Cardiac septum (tissue), 1 donor: ENCODE measurements at regions of chr1 and their contacts with region 1.

Region 1: GRCh38 chr1:85200870-85201339 is at the start of gene SYDE2:
- DNase-seq: peak; percentile 86
- total RNA-seq, gene SYDE2: 20.2 TPM

Region 2: DNA sequence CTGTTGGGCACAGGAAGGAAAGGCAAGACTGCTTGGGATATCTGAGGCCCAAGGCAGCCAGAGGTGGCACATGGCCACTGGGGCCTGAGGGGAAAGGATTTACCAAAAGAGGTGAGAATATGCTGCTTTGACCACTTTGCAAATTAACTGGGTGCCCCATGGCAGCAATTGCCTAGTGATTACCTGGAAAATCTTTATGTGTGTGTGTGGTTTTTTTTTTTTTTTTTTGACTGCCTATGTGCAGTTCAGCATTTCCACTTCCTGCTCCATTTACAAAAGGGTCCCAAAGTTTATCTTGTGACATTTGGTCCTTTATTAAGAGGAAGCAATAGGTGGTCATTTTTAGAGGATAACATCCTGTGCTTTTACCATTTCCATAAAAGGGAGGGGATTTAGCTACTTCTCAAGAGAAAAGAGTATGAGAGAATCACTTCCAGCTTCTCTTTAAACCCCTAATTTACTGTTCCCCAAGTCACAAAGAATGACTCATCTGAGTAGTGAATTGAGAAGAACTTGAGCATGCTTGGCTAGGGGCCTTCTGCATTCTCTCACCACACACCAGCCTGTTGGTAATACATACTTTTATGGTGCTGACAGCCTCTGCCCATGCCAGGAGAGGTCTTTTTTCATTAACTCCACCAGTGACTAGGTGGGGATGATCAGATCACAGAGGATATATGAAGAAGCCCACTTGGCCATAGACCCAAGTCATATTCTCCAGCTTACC is 52.2 kb before region 1 on chr1:
- intact Hi-C with region 1: loop called (anchors 5 kb)
- DNase-seq: no peak

Region 3: DNA sequence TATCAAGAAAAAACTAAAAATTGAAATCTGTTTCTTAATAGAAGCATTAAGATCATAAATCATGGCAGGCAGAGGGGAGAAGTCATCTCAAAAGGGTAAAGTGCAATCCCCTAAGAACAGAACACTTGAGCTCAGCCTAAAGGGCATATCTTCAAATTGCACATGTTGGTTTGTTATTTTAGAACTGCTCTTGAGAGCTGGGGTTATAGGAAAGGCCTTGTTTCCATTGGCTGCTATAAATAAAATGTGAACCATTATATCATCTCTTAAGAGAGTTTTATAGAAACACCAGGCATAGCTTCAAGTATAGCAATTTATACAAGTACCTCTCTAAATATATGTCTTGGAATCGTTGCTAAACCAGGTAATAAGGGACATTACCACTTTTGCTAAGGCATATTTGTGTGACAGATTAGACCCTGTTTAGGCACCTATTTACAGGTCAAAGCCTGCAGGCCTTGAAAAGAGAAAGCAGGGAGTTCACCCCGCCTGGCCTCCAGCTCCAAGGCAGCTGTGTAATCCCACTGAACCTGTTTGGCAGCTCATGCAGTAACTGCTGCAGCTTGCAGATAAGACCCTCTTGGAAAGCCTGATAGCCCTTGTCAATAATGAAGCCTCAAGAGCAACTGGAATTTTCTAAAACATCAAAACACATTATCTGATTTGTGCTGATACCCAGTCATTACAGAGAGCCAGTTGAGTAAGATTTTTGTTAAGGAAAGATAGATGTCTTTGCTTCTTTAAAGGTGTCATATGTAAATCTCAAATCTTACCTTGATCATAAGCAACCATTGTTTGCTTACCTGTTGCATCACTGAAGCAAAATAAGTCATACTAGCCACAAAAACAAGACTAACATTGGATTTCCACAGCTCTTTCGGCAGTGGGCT is 24.1 kb after region 1 on chr1:
- intact Hi-C with region 1: loop called (anchors 1 kb)
- DNase-seq: no peak